Colonic mucosa (tissue), 4 donors: ENCODE measurements at regions of chr1 and their contacts with region 1.

Region 1: GRCh38 chr1:193183019-193183627 is 3.3 kb downstream of the B3GALT2 start:
- DNase-seq: peak; percentile 29
- H3K4me3 ChIP-seq: no peak overlapping the region
- H3K27ac ChIP-seq: no peak overlapping the region
- H3K4me1 ChIP-seq: peaks cover 15% of the 10 kb centered on the region
- H3K27me3 ChIP-seq: no peaks in the 10 kb centered on the region
- CTCF ChIP-seq: peak; percentile 82

Region 2: GRCh38 chr1:192846950-192847349 is 336.2 kb before region 1 on chr1:
- intact Hi-C with region 1: no loop called
- DNase-seq: no peak
- H3K4me3 ChIP-seq: no peak overlapping the region
- H3K27ac ChIP-seq: no peak overlapping the region
- H3K4me1 ChIP-seq: no peaks in the 10 kb centered on the region
- H3K27me3 ChIP-seq: no peaks in the 10 kb centered on the region
- CTCF ChIP-seq: no peak

Region 3: DNA sequence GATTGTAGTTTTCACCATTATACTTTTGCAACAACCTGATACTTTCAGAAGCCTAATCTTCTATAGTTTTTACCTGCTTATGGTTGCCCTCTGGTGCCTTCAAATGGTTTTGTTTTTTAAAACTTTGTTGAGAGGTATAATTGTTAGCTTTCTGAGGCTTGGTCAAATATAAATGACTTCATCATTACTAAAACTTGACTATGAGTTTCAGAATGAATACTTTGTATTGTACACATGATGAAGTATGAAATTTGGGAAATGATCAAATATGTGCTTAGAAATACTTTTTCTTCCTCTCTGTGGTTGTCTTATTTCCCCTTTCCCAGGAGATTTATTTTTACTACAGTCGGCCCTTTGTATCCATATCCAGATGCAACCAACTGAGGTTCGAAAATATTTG is 155.1 kb after region 1 on chr1:
- intact Hi-C with region 1: loop called (anchors 10 kb)
- DNase-seq: no peak
- H3K4me3 ChIP-seq: no peak overlapping the region
- H3K27ac ChIP-seq: no peak overlapping the region
- H3K4me1 ChIP-seq: no peaks in the 10 kb centered on the region
- H3K27me3 ChIP-seq: no peaks in the 10 kb centered on the region
- CTCF ChIP-seq: no peak

Region 4: DNA sequence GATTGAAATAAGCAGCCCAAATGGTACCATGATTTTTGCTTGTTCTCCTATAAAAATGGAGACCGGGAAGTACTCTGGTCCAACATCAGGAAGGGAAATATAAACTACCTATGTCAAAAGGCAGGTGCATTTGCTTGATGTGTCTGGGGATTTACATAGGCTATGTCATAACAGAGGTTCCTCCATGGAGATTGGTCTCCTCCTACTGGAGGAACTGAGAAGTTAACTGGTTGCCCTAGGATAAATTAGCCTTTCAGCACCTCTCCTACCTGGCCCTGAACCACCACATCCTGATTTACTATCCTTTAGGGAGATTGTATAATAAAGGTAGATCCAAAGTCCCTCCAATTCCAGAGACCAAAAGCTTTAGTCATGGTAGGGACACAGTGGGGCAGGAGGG is 1112.6 kb after region 1 on chr1:
- intact Hi-C with region 1: loop called (anchors 10 kb)
- DNase-seq: peak; percentile 32
- H3K4me3 ChIP-seq: no peak overlapping the region
- H3K27ac ChIP-seq: no peak overlapping the region
- H3K4me1 ChIP-seq: no peaks in the 10 kb centered on the region
- H3K27me3 ChIP-seq: no peaks in the 10 kb centered on the region
- CTCF ChIP-seq: peak; percentile 78